CD14-positive monocyte (primary cell): ENCODE measurements at regions of chr9 and their contacts with region 1.

Region 1: GRCh38 chr9:83154087-83154736 is 91.3 kb upstream of the RASEF start:
- DNase-seq: no peak
- H3K4me3 ChIP-seq: no peak overlapping the region
- H3K4me3 Mint-ChIP-seq: no peak overlapping the region
- H3K27ac ChIP-seq: no peak overlapping the region
- H3K27ac Mint-ChIP-seq: no peak overlapping the region
- H3K4me1 ChIP-seq: no peaks in the 10 kb centered on the region
- H3K4me1 Mint-ChIP-seq: no peaks in the 10 kb centered on the region
- H3K27me3 ChIP-seq: no peaks in the 10 kb centered on the region
- H3K27me3 Mint-ChIP-seq: no peaks in the 10 kb centered on the region
- CTCF ChIP-seq: no peak

Region 2: GRCh38 chr9:83093939-83094338 is 60.3 kb before region 1 on chr9:
- intact Hi-C with region 1: loop called in 1 of 2 experiments (anchors 10 kb)
- DNase-seq: no peak
- H3K4me3 ChIP-seq: no peak overlapping the region
- H3K4me3 Mint-ChIP-seq: no peak overlapping the region
- H3K27ac ChIP-seq: no peak overlapping the region
- H3K27ac Mint-ChIP-seq: no peak overlapping the region
- H3K4me1 ChIP-seq: no peaks in the 10 kb centered on the region
- H3K4me1 Mint-ChIP-seq: no peaks in the 10 kb centered on the region
- H3K27me3 ChIP-seq: no peaks in the 10 kb centered on the region
- H3K27me3 Mint-ChIP-seq: peaks cover 0 to 2% (median 1%) of the 10 kb centered on the region in 3 donors
- CTCF ChIP-seq: no peak

Region 3: GRCh38 chr9:83649080-83649479 is 494.9 kb after region 1 on chr9:
- intact Hi-C with region 1: no loop called
- DNase-seq: peak; percentile 43 to 59 (median 44)
- H3K4me3 ChIP-seq: no peak overlapping the region
- H3K4me3 Mint-ChIP-seq: no peak overlapping the region
- H3K27ac ChIP-seq: no peak overlapping the region
- H3K27ac Mint-ChIP-seq: peak overlapping the region in 2 of 7 donors; percentile 58 to 74
- H3K4me1 ChIP-seq: no peaks in the 10 kb centered on the region
- H3K4me1 Mint-ChIP-seq: peaks cover 4% of the 10 kb centered on the region
- H3K27me3 ChIP-seq: no peaks in the 10 kb centered on the region
- H3K27me3 Mint-ChIP-seq: peaks cover 0 to 2% (median 0%) of the 10 kb centered on the region in 3 donors
- CTCF ChIP-seq: peak; percentile 70